ENCODE measurements at regions of chr6 and their contacts with region 1.

Region 1: GRCh38 chr6:8102122-8102958 is at the start of gene EEF1E1:
- DNase-seq: peak; percentile 99
- H3K4me3 Mint-ChIP-seq: peak within 1 kb of the TSS; percentile 96
- H3K27ac Mint-ChIP-seq: peak within 1 kb of the TSS; percentile 92
- H3K4me1 Mint-ChIP-seq: peaks cover 35% of the 10 kb centered on the region
- H3K27me3 Mint-ChIP-seq: peaks cover 16% of the 10 kb centered on the region
- total RNA-seq, gene EEF1E1: 65.2 to 71.2 TPM

Region 2: DNA sequence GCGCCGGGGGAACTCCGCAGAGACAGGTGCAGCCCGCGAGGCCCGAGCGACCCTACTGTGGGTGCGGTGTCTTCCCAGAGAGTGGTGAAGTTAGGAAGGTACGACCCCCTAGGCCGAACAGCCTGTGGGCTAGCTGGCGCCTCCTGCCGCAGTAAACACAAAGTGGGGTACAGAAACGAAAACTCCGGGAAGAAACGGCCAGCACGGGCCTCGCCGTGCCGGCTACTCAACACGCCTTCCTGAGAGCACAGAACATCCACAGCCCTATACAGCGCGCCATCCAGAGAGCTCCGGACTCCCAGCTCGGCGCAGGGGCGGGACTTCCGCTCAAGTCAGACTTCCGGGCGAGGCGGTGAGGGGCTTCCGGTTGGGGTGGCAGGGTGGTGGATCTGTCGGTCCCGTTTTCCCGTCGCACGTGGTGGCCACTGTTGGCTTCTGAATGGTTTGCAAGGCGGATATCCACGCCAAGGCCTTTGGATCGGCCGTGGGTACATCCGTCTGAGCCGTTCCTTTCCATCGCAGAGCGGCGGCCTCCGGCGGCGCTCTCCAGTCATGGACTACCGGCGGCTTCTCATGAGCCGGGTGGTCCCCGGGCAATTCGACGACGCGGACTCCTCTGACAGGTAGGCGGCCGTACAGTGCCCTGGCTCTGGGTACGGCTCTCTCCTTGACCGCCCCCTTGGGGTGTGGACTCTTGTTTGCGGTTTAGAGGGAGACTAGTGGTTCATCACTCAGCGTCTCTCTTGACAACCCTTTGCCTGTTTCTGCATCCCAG is 712.7 kb before region 1 on chr6 and contains the starts of genes CAGE1 and RIOK1:
- CTCF ChIA-PET with region 1: no interaction called
- intact Hi-C with region 1: loop called (anchors 1 kb)
- DNase-seq: peak; percentile 97
- H3K4me3 Mint-ChIP-seq: peak within 1 kb of the TSS; percentile 94
- H3K27ac Mint-ChIP-seq: peak within 1 kb of the TSS; percentile 97
- H3K4me1 Mint-ChIP-seq: peaks cover 40% of the 10 kb centered on the region
- H3K27me3 Mint-ChIP-seq: no peaks in the 10 kb centered on the region
- total RNA-seq, gene CAGE1: 0.25 to 0.26 TPM
- total RNA-seq, gene RIOK1: 33.8 to 38.5 TPM

Region 3: GRCh38 chr6:7589949-7590917 is 512.1 kb before region 1 on chr6 and contains the start of gene SNRNP48:
- CTCF ChIA-PET with region 1: no interaction called
- intact Hi-C with region 1: loop called (anchors 1 kb)
- DNase-seq: peak; percentile 96
- H3K4me3 Mint-ChIP-seq: peak within 1 kb of the TSS; percentile 95
- H3K27ac Mint-ChIP-seq: peak within 1 kb of the TSS; percentile 91
- H3K4me1 Mint-ChIP-seq: peaks cover 39% of the 10 kb centered on the region
- H3K27me3 Mint-ChIP-seq: no peaks in the 10 kb centered on the region
- total RNA-seq, gene SNRNP48: 22.7 to 22.8 TPM

Region 4: DNA sequence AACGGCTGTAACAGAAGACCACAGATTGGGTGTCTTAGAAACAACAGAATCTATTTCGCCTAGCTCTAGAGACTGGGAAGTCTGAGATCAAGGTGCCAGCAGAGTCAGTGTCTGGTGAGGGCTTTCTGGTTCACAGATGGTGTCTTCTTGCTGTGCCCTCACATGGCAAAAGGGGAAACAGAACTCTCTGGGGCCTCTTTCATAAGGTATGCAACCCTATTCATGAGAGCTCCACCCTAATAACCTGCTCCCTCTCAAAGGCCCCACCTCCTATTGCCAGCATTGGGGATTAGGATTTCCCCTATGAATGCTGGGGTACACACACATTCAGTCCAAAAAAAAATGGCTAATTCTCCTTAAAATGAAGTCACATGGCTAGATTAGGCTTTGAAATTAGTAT is 201.7 kb before region 1 on chr6:
- CTCF ChIA-PET with region 1: no interaction called
- intact Hi-C with region 1: no loop called
- DNase-seq: no peak
- H3K4me3 Mint-ChIP-seq: no peak overlapping the region
- H3K27ac Mint-ChIP-seq: no peak overlapping the region
- H3K4me1 Mint-ChIP-seq: no peaks in the 10 kb centered on the region
- H3K27me3 Mint-ChIP-seq: no peaks in the 10 kb centered on the region

Region 5: GRCh38 chr6:7910654-7911344 is 191.5 kb before region 1 on chr6 and contains the start of gene TXNDC5:
- CTCF ChIA-PET with region 1: no interaction called
- intact Hi-C with region 1: loop called (anchors 1 kb)
- DNase-seq: peak; percentile 71
- H3K4me3 Mint-ChIP-seq: peak within 1 kb of the TSS; percentile 81
- H3K27ac Mint-ChIP-seq: peak within 1 kb of the TSS; percentile 38
- H3K4me1 Mint-ChIP-seq: peaks cover 14% of the 10 kb centered on the region
- H3K27me3 Mint-ChIP-seq: no peaks in the 10 kb centered on the region
- total RNA-seq, gene TXNDC5: 60.7 to 62.2 TPM

Region 6: DNA sequence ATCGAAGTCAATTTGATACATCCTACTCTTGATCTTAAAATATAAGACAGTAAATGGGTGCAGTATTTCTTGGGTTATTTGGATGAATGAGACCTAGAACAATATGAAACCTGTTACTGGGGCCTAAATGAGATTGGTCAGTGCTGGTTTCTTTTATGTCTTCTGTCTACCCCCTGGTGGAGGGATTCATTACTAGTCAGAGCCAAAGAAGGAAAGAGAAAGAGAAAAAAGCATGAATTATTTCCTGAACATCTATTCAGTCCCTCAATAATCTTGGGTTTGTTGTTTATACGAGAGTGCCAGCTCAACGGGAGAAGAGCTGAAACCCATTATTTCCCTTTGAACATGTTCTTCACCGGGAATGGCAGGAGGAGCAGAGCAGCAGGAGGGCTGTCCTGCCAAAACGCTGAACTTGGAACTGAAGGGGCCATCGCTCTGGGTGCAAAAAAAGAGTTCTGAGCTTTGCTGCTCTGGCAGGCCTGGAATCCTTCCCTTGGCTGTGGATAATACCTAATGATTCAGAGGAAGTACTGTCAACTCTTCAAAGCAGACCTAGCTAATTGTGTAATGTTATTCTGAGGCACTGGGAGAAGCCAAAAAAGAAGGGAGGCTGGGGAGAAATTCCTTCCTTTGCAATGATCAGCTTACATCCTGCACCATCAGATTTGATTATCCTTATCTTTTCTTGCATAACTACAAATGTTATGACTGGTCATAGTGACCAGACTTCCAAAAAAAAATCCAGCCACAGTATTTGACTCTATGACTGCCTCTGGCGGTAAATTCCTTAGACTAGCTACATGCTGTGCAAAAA is 110.1 kb before region 1 on chr6:
- CTCF ChIA-PET with region 1: no interaction called
- intact Hi-C with region 1: no loop called
- DNase-seq: no peak
- H3K4me3 Mint-ChIP-seq: no peak overlapping the region
- H3K27ac Mint-ChIP-seq: no peak overlapping the region
- H3K4me1 Mint-ChIP-seq: no peaks in the 10 kb centered on the region
- H3K27me3 Mint-ChIP-seq: no peaks in the 10 kb centered on the region

Region 7: GRCh38 chr6:8017276-8017701 is 85.1 kb before region 1 on chr6:
- CTCF ChIA-PET with region 1: no interaction called
- intact Hi-C with region 1: loop called (anchors 5 kb)
- DNase-seq: no peak
- H3K4me3 Mint-ChIP-seq: peak overlapping the region; percentile 78
- H3K27ac Mint-ChIP-seq: peak overlapping the region; percentile 94
- H3K4me1 Mint-ChIP-seq: peaks cover 8% of the 10 kb centered on the region
- H3K27me3 Mint-ChIP-seq: no peaks in the 10 kb centered on the region

Region 8: DNA sequence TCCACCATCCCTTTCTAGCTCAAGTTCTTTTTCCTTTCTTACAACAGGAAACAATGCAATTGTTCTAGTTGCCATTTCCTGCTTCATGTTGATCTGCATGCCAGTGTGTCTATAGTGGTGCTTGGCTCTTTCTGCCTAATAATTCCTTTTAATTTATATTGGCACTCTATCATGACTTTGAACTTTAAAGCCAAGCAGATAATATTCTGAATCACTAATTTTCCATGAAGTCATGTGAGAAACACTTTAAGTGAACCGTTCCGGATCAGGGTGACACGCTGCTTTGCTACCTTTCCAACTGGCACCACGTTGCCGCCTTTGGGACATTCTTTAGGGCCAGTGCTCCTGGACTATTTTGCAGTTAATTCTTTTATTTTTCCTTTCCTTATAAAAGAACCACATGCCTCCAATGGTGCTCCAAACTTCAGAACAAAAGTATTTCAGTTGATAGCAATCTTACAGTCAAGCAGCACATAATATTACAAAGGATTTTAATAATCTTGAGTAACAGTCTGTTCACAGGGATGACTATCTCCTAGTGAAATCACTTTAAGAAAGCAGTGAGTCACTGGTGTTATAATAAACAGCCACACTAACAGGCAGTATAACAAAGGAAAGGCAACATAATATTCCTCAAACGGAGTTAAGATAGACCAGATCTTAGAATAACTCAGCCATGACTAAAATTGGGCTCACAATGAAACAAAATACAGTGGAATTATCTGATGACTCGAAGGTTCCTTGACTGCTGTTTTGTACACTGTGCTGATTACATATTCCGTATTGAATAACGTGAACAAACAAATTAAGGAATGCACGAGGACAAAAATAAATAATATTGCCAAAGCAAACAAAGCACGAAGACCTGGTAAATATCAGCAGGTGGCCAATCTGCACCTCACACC is 19.1 kb before region 1 on chr6:
- CTCF ChIA-PET with region 1: no interaction called
- intact Hi-C with region 1: loop called (anchors 2 kb)
- DNase-seq: no peak
- H3K4me3 Mint-ChIP-seq: no peak overlapping the region
- H3K27ac Mint-ChIP-seq: peak overlapping the region; percentile 59
- H3K4me1 Mint-ChIP-seq: peaks cover 30% of the 10 kb centered on the region
- H3K27me3 Mint-ChIP-seq: no peaks in the 10 kb centered on the region

Region 9: DNA sequence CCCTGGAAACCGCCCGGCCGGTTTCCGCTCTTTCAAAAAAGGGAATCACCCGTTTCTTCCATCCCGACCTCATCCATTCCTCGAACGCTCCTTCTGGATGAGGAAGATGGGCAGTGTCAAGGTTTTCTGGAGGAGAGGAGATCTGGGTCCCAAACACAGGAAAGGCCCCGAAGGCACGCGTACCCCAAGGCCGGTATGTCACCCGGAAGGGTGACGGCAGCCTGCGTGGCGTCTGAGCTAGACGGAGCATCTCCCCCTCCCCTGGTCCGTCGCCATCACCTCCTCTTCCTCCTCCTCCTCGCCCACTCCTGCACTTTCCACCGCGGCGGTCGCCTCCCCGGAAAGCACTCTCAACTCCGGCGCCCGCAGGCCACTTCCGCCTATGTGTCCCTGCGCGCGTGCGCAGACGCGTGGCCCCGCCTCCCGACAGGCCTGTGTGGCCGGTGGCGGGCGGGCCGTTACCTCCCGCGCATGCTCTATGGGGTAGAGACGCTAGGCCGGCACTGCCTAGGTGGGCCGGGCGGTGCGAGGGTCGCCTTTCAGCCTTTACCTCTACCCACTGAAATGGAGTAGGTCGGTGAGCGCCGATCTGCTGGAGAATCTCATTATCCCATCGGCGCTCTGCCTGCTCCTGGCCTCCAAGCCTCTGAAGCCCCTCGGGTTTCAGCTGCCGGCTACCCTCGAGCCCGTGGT is 333.0 kb after region 1 on chr6 and contains the start of gene SLC35B3:
- CTCF ChIA-PET with region 1: no interaction called
- intact Hi-C with region 1: loop called (anchors 1 kb)
- DNase-seq: peak; percentile 97
- H3K4me3 Mint-ChIP-seq: peak within 1 kb of the TSS; percentile 89
- H3K27ac Mint-ChIP-seq: peak within 1 kb of the TSS; percentile 94
- H3K4me1 Mint-ChIP-seq: peaks cover 32% of the 10 kb centered on the region
- H3K27me3 Mint-ChIP-seq: no peaks in the 10 kb centered on the region
- total RNA-seq, gene SLC35B3: 7.7 to 8.0 TPM

Measured in activated naive CD4-positive, alpha-beta T cell treated with anti-CD3 and anti-CD28 coated beads for 36 hours (primary cell).